ENCODE measurements at regions of chr11 and their contacts with region 1.

Region 1: DNA sequence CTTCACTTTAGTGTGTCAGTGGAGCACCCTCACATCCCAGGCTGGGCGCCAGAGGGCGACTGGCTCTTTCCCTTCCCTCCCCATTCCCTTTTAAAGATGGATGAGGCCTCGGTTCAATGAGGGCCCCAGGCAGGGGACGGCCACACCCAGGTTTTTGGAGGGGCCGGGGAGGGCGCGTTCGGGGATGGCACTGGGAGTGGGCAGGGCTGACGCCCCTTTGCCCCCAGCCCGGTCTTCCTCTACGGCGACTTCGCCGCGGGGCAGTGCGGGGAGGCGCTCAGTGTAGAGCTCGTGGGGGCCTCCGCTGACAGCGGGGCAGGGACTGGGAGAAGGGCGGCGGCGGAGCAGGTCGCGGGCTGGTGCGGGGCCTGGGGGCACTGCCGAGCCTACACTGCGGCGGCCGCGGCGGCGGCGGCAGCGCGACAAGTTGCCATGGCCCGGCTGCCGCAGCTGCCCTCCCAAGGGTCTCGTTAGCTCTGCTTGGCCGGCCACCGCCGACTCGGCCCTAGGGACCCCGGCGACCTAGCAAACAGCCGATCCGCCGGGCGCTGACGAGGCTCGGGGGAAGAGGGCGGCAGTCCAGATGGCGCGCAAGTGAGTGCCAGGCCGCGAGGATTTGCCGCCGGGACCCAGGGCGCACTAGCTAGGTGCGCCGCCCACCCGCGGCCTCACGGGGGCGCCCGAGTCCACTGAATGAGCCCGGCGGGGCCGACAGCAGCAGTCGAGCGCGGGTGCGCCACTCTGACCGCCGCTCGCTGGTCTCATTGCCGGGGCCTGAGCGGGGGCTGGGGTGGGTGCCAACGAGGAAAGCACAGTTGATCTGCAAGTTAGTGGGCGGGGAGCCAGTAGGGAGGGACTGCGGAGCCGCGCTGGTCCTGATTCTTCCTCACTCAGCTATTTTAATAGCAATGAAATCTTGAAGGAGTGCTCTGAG is 92.7 kb downstream of the RRM1 start:
- DNase-seq: peak; percentile 44 to 85 (median 74)
- ATAC-seq: peak; percentile 89 to 95 (median 94)
- H3K4me3 ChIP-seq: peak overlapping the region; percentile 38 to 61
- H3K4me3 Mint-ChIP-seq: peak overlapping the region; percentile 70 to 79 (median 70)
- H3K27ac ChIP-seq: no peak overlapping the region
- H3K27ac Mint-ChIP-seq: no peak overlapping the region
- H3K4me1 ChIP-seq: peaks cover 0 to 10% of the 10 kb centered on the region in 2 experiments
- H3K4me1 Mint-ChIP-seq: peaks cover 0 to 6% (median 3%) of the 10 kb centered on the region in 3 donors
- H3K27me3 ChIP-seq: peaks cover 0 to 7% of the 10 kb centered on the region in 2 experiments
- H3K27me3 Mint-ChIP-seq: peaks cover 0 to 14% of the 10 kb centered on the region in 2 donors

Region 2: DNA sequence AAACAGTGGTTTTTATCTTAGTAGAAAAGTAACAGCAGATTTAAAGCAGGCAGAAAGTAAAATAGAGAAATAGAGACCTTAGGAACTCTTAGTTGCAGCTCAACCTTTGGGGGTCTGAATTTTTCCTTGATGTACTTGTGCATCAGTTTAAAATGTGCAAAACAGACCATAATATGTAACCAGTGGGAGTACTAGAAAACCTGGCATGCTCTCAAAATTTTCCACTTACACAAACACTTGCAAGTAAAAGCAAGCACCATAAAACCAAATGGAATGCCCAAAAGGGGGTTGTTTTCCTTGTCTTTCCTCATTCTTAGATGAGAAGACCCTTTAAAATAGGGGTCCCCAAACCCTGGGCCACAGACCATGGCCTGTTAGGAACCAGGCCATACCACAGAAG is 942.3 kb before region 1 on chr11:
- CTCF ChIA-PET with region 1: no interaction called
- POLR2A ChIA-PET with region 1: no interaction called
- DNase-seq: no peak
- ATAC-seq: no peak
- H3K4me3 ChIP-seq: no peak overlapping the region
- H3K4me3 Mint-ChIP-seq: no peak overlapping the region
- H3K27ac ChIP-seq: no peak overlapping the region
- H3K27ac Mint-ChIP-seq: no peak overlapping the region
- H3K4me1 ChIP-seq: no peaks in the 10 kb centered on the region
- H3K4me1 Mint-ChIP-seq: no peaks in the 10 kb centered on the region
- H3K27me3 ChIP-seq: peaks cover 0 to 7% of the 10 kb centered on the region in 2 experiments
- H3K27me3 Mint-ChIP-seq: peaks cover 18 to 22% of the 10 kb centered on the region in 2 donors

Region 3: DNA sequence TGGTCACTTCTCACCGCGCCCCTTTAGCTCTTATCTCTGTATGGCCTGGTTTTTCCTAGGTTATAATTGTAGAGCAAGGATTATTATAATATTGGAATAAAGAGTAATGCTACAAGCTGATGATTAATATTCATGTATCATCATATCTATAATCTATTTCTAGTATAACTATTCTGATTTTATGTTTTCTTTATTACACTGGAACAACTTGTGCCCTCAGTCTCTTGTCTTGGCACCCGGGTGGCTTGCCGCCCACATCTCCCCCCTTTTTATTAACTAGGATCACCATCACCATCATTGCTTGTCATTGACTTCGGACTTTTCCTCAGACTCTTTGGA is 306.1 kb after region 1 on chr11:
- CTCF ChIA-PET with region 1: interaction called, 7 to 18 read pairs
- POLR2A ChIA-PET with region 1: no interaction called
- DNase-seq: no peak
- ATAC-seq: no peak
- H3K4me3 ChIP-seq: no peak overlapping the region
- H3K4me3 Mint-ChIP-seq: no peak overlapping the region
- H3K27ac ChIP-seq: no peak overlapping the region
- H3K27ac Mint-ChIP-seq: no peak overlapping the region
- H3K4me1 ChIP-seq: no peaks in the 10 kb centered on the region
- H3K4me1 Mint-ChIP-seq: peaks cover 0 to 3% (median 3%) of the 10 kb centered on the region in 3 donors
- H3K27me3 ChIP-seq: peaks cover 0 to 4% of the 10 kb centered on the region in 2 experiments
- H3K27me3 Mint-ChIP-seq: peaks cover 19 to 41% of the 10 kb centered on the region in 2 donors

Region 4: GRCh38 chr11:4539603-4540219 is 352.4 kb after region 1 on chr11:
- CTCF ChIA-PET with region 1: interaction called, 39 to 49 read pairs
- POLR2A ChIA-PET with region 1: no interaction called
- DNase-seq: peak in 31 of 35 experiments; percentile 9 to 65 (median 35)
- ATAC-seq: peak in 2 of 4 experiments; percentile 50 to 64
- H3K4me3 ChIP-seq: no peak overlapping the region
- H3K4me3 Mint-ChIP-seq: no peak overlapping the region
- H3K27ac ChIP-seq: no peak overlapping the region
- H3K27ac Mint-ChIP-seq: no peak overlapping the region
- H3K4me1 ChIP-seq: no peaks in the 10 kb centered on the region
- H3K4me1 Mint-ChIP-seq: no peaks in the 10 kb centered on the region
- H3K27me3 ChIP-seq: no peaks in the 10 kb centered on the region
- H3K27me3 Mint-ChIP-seq: peaks cover 6 to 15% of the 10 kb centered on the region in 2 donors